ENCODE measurements at regions of chr17 and their contacts with region 1.

Region 1: GRCh38 chr17:74089869-74090464 is 113.5 kb upstream of the RPL38 start:
- DNase-seq: peak; percentile 87
- ATAC-seq: peak; percentile 60
- H3K4me3 Mint-ChIP-seq: no peak overlapping the region
- H3K27ac Mint-ChIP-seq: no peak overlapping the region
- H3K4me1 Mint-ChIP-seq: no peaks in the 10 kb centered on the region
- H3K27me3 Mint-ChIP-seq: peaks cover 13% of the 10 kb centered on the region

Region 2: GRCh38 chr17:74123350-74123749 is 33.4 kb after region 1 on chr17:
- CTCF ChIA-PET with region 1: interaction called, 3 read pairs
- POLR2A ChIA-PET with region 1: no interaction called
- intact Hi-C with region 1: loop called in 1 of 2 experiments (anchors 1 kb)
- DNase-seq: no peak
- ATAC-seq: no peak
- H3K4me3 Mint-ChIP-seq: no peak overlapping the region
- H3K27ac Mint-ChIP-seq: no peak overlapping the region
- H3K4me1 Mint-ChIP-seq: no peaks in the 10 kb centered on the region
- H3K27me3 Mint-ChIP-seq: peaks cover 17% of the 10 kb centered on the region

Region 3: DNA sequence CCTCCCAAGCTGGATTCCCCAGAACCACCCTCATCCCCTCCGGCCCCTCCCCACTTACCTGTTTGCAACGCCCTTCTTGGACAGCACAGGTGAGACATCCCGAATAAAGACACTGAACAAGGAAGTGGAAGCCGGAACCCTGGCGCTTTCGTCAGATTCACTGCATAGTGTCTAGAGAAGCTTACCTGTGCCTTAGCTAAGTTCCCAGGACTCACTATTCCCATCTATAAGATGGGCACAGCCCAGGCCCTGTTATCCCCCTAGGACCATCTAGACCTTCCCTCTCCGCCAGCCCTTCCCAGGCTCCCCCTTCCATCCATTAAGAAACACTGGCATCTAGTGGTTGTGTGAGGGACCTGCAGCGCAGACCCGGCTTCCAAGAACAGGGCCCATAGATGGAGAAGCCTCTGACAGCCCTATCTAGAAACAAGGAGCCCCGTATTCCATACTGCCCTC is 86.6 kb after region 1 on chr17:
- CTCF ChIA-PET with region 1: interaction called, 6 read pairs
- POLR2A ChIA-PET with region 1: no interaction called
- intact Hi-C with region 1: loop called (anchors 1 to 5 kb)
- DNase-seq: peak; percentile 72
- ATAC-seq: peak; percentile 80
- H3K4me3 Mint-ChIP-seq: no peak overlapping the region
- H3K27ac Mint-ChIP-seq: no peak overlapping the region
- H3K4me1 Mint-ChIP-seq: no peaks in the 10 kb centered on the region
- H3K27me3 Mint-ChIP-seq: peaks cover 9% of the 10 kb centered on the region

Region 4: GRCh38 chr17:74203439-74204240 is 113.7 kb after region 1 on chr17 and contains the start of gene RPL38:
- CTCF ChIA-PET with region 1: interaction called, 5 read pairs
- POLR2A ChIA-PET with region 1: no interaction called
- intact Hi-C with region 1: loop called in 1 of 2 experiments (anchors 1 kb)
- DNase-seq: peak; percentile 98
- ATAC-seq: peak; percentile 83
- H3K4me3 Mint-ChIP-seq: peak within 1 kb of the TSS; percentile 100
- H3K27ac Mint-ChIP-seq: peak within 1 kb of the TSS; percentile 100
- H3K4me1 Mint-ChIP-seq: peaks cover 44% of the 10 kb centered on the region
- H3K27me3 Mint-ChIP-seq: peaks cover 11% of the 10 kb centered on the region
- total RNA-seq, gene RPL38: 1,648 to 1,818 TPM

Measured in activated CD4-positive, alpha-beta T cell treated with anti-CD3 and anti-CD28 coated beads for 36 hours (primary cell).